ENCODE measurements at regions of chr11 and their contacts with region 1.

Region 1: DNA sequence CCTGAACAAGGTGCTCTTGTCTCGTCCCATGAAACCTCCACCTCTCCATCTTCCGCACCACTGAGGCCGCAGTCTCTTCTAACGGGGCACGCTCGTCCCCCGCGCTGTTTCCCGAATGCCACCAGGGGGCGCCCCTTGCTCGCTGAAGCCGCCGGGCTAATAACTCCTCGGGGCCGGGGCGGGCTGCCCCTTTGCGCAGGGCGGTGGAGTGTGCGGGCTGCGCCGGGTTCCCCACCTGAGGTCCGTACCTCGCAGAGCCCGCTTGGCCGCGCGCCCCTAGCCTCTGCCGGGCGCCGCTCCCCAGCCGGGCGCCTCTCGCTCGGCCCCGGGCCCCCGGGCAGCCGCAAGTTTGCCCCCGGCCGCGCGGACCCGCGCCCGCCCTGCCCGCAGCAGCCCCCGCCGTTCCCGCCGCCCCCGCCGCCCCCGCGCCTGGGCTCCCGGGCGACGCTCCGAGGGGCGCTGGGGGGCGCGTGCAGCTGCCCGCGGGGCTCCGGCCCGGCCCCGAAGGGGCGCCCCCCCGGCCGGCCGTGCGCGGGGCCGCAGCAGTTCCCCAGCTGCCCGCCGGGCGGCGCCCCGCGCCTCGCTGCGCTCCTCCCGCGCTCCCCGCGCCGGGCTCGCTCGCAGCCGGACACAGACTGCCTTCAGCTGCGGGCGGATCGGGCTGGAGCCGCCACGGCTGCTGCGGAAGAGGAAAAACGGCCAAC is at the start of gene GRIK4:
- DNase-seq: peak; percentile 90
- total RNA-seq, gene GRIK4: 0.40 TPM

Region 2: DNA sequence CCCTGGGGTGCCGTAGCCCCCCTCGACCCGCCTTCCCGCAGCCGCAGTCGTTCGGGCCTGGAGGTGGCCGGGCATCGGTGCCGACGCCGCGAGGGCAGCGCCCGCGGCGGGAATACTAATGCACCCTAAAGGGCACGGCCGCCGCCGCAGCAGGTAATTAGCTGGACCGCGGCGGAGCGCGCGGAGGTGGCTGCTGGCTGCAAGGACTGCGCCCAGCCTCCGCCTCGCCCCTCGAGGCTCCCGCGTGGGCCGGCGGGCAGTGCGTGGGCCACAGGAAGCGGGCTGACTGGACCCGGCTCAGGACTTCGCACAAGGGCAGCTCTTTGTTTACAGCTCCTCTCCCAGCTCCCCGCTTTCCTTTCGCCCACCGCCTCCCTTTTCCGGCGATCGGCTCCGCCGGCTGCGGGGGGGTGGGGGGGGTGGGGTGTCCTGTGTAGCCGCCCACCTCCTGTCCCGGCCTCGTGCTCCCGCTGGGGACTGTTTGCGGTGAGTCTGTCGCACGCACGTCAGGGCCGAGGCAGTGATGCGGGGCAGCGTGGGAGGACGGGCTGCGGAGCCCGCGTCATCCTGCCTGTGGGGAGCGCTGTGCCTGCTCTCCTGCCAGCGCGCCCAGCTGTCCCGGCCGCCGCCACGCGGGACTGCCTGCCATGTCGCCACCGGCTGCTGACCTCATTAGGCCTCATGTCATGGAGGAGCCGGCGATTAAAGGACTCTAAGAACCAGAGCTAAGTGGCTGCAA is 53.5 kb after region 1 on chr11:
- intact Hi-C with region 1: loop called (anchors 5 kb)
- DNase-seq: no peak

Region 3: GRCh38 chr11:120682866-120683265 is 171.6 kb after region 1 on chr11:
- intact Hi-C with region 1: loop called (anchors 1 kb)
- DNase-seq: no peak

Region 4: DNA sequence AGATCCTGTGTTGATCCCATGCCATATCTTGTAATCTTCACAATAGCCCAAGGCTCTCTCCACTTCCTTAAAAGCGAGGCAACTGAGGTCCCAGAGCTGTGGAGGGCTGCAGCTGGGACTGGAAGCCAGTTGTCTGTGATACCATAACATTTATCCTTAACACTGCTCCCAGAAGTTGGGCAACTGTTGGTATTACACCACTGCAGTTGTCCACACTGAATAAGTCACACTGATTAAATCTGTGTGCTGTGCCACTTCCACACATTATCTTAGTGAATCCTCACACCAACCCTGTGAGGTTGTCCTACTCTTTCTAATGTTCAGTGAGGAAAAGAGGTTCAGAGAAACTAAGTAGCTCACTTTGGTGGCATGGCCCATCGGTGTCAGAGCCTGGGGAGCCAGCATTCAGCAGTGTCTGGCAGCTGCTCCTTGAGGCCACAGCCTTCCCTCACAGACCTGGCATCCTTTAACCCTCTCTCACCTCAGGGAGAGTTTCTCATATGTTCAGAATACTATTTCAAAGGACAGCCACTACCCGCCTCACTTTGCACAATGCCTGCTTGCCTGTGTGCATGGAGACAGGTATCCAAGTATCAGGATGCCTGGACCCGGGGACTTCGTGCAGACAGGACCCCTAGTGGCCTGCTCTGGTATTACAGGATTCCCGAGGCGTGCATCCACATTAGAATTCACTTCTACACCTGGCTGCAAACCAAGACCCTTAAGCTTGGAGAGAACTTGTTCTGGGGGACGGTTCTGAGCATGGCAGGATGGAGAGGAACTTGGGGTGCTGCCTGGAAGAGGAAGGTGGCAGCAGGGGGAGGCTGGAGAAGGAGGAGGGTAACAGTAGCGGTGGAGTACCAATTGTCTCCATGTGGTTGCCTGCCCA is 290.8 kb after region 1 on chr11:
- intact Hi-C with region 1: loop called (anchors 2 kb)
- DNase-seq: no peak

Region 5: GRCh38 chr11:120952461-120953434 is 441.5 kb after region 1 on chr11:
- intact Hi-C with region 1: loop called (anchors 2 kb)
- DNase-seq: no peak

Region 6: GRCh38 chr11:121112498-121113455 is 601.5 kb after region 1 on chr11:
- intact Hi-C with region 1: loop called (anchors 5 kb)
- DNase-seq: no peak

Region 7: DNA sequence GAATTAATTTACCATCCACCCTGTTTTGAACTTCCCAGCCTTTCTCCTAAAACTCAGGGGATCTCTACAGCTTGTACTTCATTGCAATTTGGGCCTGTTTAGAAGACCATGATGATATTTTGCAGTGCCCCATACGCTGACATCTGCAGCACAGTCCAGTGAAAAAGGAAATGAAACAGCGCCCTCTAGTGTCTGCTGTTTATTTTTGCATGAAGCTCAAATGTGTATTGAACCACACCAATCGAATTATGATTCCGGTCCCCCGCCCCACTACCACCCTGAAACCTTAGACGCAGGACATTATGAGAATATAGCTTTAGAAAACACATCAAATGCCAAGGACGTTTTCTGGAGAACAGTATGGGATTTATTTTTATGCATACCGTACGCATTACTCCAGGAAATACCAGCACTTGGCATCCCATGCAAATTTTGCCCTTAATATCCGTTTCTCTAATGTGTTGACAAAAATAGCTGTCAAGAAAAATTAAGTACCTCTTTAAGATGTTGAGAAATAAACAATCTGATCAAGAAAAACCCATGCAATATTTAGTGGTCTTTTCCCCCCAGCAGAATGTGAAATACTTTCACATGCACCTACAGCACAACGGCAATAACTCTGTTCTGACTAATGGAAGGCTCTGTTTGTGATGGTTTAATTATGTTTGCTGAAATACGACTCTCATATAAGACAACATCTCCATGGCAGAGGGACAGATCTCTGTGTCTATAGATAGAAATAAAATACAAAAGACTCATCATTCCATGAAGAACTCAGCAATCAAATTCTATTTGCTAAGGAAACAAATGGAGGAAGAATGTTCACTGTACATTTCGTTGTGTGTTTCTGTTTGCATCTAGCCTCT is 683.7 kb after region 1 on chr11:
- intact Hi-C with region 1: loop called (anchors 5 kb)
- DNase-seq: no peak